HepG2 (cell line): ENCODE measurements at regions of chr1 and their contacts with region 1.

Region 1: GRCh38 chr1:151165738-151166505 is at the starts of genes LYSMD1 and SCNM1:
- DNase-seq: peak; percentile 97
- ATAC-seq: peak; percentile 94
- H3K4me3 ChIP-seq: peak within 1 kb of the TSS; percentile 91 to 94 (median 93)
- H3K27ac ChIP-seq: peak within 1 kb of the TSS; percentile 85
- H3K4me1 ChIP-seq: peaks cover 25% of the 10 kb centered on the region
- H3K27me3 ChIP-seq: peaks cover 0 to 5% of the 10 kb centered on the region in 2 experiments; a peak in 2 of 5 replicates
- CTCF ChIP-seq: no peak; the same call in 1 of the 2 replicates
- EP300 ChIP-seq: peak in 1 of 2 experiments; percentile 54; a peak in 1 of 4 replicates
- POLR2A ChIP-seq: peak; percentile 63 to 73
- RAD21 ChIP-seq: no peak
- total RNA-seq, gene LYSMD1: 3.8 TPM in 2 replicates
- total RNA-seq, gene SCNM1: 31.5 and 32.5 TPM in 2 replicates

Region 2: DNA sequence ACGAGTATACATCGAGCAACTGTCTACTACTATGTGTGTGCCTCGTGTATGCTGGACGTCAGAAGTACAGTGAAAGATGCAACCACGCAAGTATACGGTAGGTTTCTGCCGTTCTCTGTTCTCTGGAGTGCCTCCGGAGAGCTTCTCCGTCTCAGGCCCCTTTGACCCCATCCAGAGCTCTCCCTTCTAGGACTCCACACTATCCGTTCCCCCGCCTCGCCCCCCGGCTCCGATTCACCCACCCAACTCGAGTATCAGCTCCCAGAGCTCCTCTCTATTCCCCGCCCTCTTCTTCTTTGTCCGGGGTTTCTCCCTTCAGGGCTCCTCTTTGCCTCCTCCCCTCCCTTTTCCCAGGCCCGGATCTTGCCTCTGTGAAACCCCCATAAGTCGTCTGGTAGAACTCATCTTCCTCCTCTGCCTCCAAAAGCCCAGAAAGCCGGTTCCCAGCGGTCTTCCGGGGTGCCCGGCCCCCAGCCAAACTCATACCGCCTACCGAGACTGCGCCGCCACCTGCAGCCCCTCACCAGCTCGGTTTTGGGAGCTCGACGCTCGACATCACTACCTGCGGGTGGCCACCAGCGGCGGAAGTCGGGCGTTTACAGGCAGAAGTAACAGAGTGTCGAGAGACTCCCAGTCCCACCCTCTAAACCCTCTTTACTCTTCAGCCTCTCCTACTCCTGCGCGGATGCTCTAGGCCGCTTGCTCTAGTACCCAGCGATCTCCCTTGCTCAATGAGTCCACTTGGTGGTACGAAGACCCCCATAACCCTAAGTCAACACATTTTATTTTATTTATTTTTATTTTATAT is 23.9 kb after region 1 on chr1 and contains the start of gene VPS72:
- CTCF ChIA-PET with region 1: no interaction called
- POLR2A ChIA-PET with region 1: interaction called, 25 read pairs
- in situ Hi-C with region 1: no loop called
- intact Hi-C with region 1: no loop called
- DNase-seq: peak; percentile 85
- ATAC-seq: peak; percentile 95
- H3K4me3 ChIP-seq: peak within 1 kb of the TSS; percentile 78 to 82 (median 81)
- H3K27ac ChIP-seq: peak within 1 kb of the TSS; percentile 78
- H3K4me1 ChIP-seq: peaks cover 42% of the 10 kb centered on the region
- H3K27me3 ChIP-seq: no peaks in the 10 kb centered on the region
- CTCF ChIP-seq: peak; percentile 51
- EP300 ChIP-seq: peak in 1 of 2 experiments; percentile 44; a peak in 1 of 4 replicates
- POLR2A ChIP-seq: peak in 1 of 2 experiments; percentile 91
- RAD21 ChIP-seq: peak; percentile 14; the same call in 1 of the 2 replicates
- total RNA-seq, gene VPS72: 34.5 TPM in 2 replicates

Region 3: DNA sequence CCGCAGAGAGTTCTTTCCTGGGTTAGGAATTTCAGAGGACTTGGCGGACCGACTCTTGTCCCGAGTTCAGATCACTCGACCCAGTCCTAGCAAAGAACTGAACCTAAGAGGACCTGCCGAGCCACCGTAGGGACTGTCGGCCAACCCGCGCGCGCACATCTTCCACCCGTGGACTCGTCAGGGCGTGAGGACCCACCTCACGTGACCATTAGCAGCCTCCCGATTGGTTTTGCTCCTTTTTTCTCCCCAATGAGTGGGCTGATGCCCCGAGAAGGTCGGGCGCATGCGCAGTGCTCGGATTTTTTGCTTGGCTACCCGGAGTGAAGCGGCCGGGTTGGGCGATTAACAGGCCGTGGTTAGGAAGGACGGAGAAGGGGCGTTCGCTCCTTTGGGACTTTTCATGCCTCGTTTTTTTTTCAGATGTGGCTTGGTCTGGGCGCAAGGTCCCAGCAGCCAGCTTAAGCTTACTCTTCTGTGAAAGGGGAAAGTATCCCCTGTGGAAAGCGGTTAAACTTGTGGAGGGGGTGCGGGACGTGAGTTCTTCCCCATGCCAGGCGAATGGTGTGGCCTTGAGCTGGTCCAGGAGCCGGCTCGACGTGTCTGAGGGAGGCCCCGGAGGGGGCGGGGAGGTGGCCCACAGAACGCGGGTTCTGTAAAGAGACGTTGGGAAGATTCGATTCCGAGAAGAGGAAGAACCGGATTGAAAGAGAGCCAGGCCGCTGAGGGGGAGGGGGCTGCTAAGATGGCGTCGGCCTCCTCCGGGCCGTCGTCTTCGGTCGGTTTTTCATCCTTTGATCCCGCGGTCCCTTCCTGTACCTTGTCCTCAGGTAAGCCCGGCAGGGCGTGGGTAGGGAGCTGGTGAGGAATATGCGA is 32.6 kb after region 1 on chr1 and contains the start of gene PIP5K1A:
- CTCF ChIA-PET with region 1: no interaction called
- POLR2A ChIA-PET with region 1: interaction called, 14 read pairs
- in situ Hi-C with region 1: no loop called
- intact Hi-C with region 1: no loop called
- DNase-seq: peak; percentile 97
- ATAC-seq: peak; percentile 76
- H3K4me3 ChIP-seq: peak within 1 kb of the TSS; percentile 87 to 95 (median 94)
- H3K27ac ChIP-seq: peak within 1 kb of the TSS; percentile 93
- H3K4me1 ChIP-seq: peaks cover 34% of the 10 kb centered on the region
- H3K27me3 ChIP-seq: no peaks in the 10 kb centered on the region; a peak in 1 of 5 replicates
- CTCF ChIP-seq: no peak
- EP300 ChIP-seq: no peak
- POLR2A ChIP-seq: peak; percentile 74 to 84
- RAD21 ChIP-seq: no peak
- total RNA-seq, gene PIP5K1A: 43.8 and 45.3 TPM in 2 replicates